Ascending aorta (tissue), 2 donors: ENCODE measurements at regions of chr10 and their contacts with region 1.

Region 1: GRCh38 chr10:78302989-78303854 is 269.6 kb downstream of the RPS24 start:
- DNase-seq: peak; percentile 75 to 96
- H3K4me3 ChIP-seq: peak overlapping the region; percentile 66 to 75
- H3K27ac ChIP-seq: peak overlapping the region; percentile 78 to 82
- H3K4me1 ChIP-seq: peaks cover 0 to 11% of the 10 kb centered on the region in 2 donors
- H3K27me3 ChIP-seq: no peaks in the 10 kb centered on the region
- CTCF ChIP-seq: peak; percentile 55 to 80 (median 56)

Region 2: GRCh38 chr10:77974396-77975074 is 328.7 kb before region 1 on chr10:
- intact Hi-C with region 1: no loop called
- DNase-seq: peak in 1 of 2 donors; percentile 67
- H3K4me3 ChIP-seq: no peak overlapping the region
- H3K27ac ChIP-seq: peak overlapping the region; percentile 78 to 89
- H3K4me1 ChIP-seq: peaks cover 0 to 28% of the 10 kb centered on the region in 2 donors
- H3K27me3 ChIP-seq: no peaks in the 10 kb centered on the region
- CTCF ChIP-seq: peak; percentile 19 to 41 (median 32)

Region 3: GRCh38 chr10:78211561-78212051 is 91.6 kb before region 1 on chr10:
- intact Hi-C with region 1: loop called (anchors 1 kb)
- DNase-seq: no peak
- H3K4me3 ChIP-seq: no peak overlapping the region
- H3K27ac ChIP-seq: no peak overlapping the region
- H3K4me1 ChIP-seq: peaks cover 4 to 13% of the 10 kb centered on the region in 2 donors
- H3K27me3 ChIP-seq: no peaks in the 10 kb centered on the region
- CTCF ChIP-seq: peak; percentile 42 to 72 (median 45)

Region 4: DNA sequence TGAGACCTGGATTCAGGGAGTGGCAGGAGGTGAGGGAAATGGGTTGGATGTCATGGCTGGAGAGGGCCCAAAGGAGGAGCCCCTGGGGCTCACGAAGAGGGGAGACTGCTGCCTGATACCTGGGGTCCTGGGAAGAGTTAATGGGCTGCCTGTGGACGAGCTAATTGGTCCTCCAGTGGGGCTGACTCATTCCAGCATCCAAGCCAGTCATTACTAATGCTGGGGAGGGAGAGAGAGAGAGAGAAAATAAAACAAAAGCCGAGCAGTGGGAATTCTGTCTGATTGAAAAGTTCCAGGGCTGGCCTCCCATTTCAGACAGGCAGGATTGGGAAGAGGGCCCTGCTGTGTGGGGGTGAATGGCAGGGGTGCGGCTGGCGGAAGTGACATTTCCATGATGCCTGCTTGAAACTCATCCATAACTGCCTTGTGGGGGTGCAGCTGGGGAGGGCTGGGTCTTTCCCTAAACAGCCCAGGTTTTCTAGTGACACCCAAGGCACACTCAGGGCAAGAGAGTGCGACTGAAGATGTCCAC is 28.2 kb after region 1 on chr10:
- intact Hi-C with region 1: loop called (anchors 1 kb)
- DNase-seq: peak in 1 of 2 donors; percentile 65
- H3K4me3 ChIP-seq: no peak overlapping the region
- H3K27ac ChIP-seq: peak overlapping the region; percentile 40 to 67
- H3K4me1 ChIP-seq: peaks cover 6 to 34% of the 10 kb centered on the region in 2 donors
- H3K27me3 ChIP-seq: no peaks in the 10 kb centered on the region
- CTCF ChIP-seq: no peak

Region 5: GRCh38 chr10:78543749-78544362 is 240.6 kb after region 1 on chr10:
- intact Hi-C with region 1: loop called (anchors 5 kb)
- DNase-seq: peak in 1 of 2 donors; percentile 89
- H3K4me3 ChIP-seq: no peak overlapping the region
- H3K27ac ChIP-seq: peak overlapping the region; percentile 39 to 53
- H3K4me1 ChIP-seq: peaks cover 0 to 5% of the 10 kb centered on the region in 2 donors
- H3K27me3 ChIP-seq: no peaks in the 10 kb centered on the region
- CTCF ChIP-seq: no peak

Region 6: GRCh38 chr10:78972947-78973900 is 670.0 kb after region 1 on chr10:
- intact Hi-C with region 1: loop called (anchors 5 kb)
- DNase-seq: peak; percentile 49 to 90
- H3K4me3 ChIP-seq: peak overlapping the region; percentile 64 to 67
- H3K27ac ChIP-seq: peak overlapping the region; percentile 95 to 98
- H3K4me1 ChIP-seq: peaks cover 6 to 22% of the 10 kb centered on the region in 2 donors
- H3K27me3 ChIP-seq: no peaks in the 10 kb centered on the region
- CTCF ChIP-seq: no peak

Region 7: GRCh38 chr10:79195091-79195923 is 892.1 kb after region 1 on chr10:
- intact Hi-C with region 1: loop called (anchors 5 kb)
- DNase-seq: peak; percentile 36 to 93
- H3K4me3 ChIP-seq: no peak overlapping the region
- H3K27ac ChIP-seq: peak overlapping the region in 1 of 2 donors; percentile 62
- H3K4me1 ChIP-seq: peaks cover 3 to 7% of the 10 kb centered on the region in 2 donors
- H3K27me3 ChIP-seq: no peaks in the 10 kb centered on the region
- CTCF ChIP-seq: peak; percentile 89 to 97 (median 93)